GM12878 (cell line): ENCODE measurements at regions of chr14 and their contacts with region 1.

Region 1: DNA sequence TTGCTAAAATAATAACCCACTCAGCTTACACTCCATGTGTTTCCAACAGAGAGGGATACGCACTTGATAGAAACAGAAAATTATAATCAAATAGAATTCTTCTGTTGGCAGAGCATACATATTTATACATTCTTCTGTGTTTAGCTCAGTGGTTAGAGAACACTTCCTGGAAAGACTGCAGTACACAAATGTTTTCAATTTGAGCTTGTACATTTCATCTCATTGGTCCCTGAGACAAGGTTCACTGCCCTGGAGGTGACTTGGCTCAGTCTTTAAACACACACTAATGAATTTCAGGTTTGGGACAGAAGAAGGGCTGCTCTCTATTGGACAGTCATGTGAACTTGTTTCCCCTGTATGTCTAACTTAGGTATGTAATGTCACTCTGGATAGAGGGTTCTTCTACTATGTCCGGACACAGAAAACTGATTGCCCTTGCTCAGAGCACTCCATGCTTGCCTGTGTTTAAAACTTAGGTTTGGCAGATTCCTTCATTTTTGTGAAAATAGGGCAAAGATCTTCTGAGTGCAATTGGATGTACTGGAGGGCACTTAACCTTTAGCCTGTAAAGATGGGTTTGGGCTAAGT is 22.9 kb downstream of the PROX2 start:
- DNase-seq: no peak
- ATAC-seq: peak; percentile 32
- H3K4me3 ChIP-seq: no peak overlapping the region
- H3K27ac ChIP-seq: no peak overlapping the region
- H3K4me1 ChIP-seq: no peaks in the 10 kb centered on the region
- H3K27me3 ChIP-seq: no peaks in the 10 kb centered on the region
- CTCF ChIP-seq: no peak
- EP300 ChIP-seq: no peak
- POLR2A ChIP-seq: no peak
- RAD21 ChIP-seq: no peak

Region 2: DNA sequence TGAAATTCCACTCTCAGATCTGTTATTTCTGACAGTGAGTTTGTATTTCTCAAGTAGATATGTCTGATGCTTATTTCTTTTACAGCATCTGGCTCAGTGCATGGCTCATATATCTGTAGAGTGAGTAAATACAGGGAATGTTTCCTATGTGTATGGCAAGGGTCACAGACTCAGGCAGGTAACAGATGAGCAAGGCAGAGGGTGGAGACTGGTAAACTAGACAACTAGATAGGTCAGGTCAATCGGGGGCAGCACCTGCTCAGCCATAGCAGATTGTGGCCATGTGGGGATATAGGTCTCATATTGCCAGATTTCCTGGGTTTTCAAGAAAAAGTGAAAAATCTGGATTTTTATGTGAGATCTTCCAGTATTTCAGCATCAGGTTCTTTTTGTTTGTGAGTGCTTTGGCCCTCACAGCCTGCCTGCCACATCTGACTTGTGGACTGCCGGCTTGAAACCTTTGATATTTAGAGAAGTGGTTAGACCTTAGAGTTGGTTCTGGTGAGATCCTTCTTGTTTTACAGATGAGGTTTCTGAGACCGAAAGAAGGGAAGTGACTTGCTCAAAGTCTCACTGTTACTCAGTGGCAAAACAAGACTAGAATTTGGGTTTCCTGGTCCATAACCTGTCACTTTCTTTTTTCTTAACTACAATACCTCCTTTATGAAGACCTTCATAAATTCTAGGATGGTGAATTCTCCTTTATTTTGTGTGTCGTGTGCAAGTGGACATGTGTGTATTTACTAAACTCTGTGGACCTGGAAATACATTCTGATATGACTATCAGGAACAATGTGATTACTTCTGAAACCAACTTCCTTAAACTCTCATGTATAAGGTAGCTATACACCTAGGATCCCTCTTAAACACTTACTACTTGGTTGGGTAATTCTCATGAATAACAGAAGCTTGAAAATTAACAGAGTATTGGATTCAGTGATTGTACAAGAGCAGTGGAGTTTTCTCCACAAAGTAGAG is 11.5 kb before region 1 on chr14:
- CTCF ChIA-PET with region 1: interaction called, 106 read pairs
- POLR2A ChIA-PET with region 1: no interaction called
- RAD21 ChIA-PET with region 1: interaction called, 7 read pairs
- SMC1A ChIA-PET with region 1: interaction called, 16 read pairs
- in situ Hi-C with region 1: no loop called
- intact Hi-C with region 1: no loop called
- DNase-seq: peak; percentile 77
- ATAC-seq: peak; percentile 95
- H3K4me3 ChIP-seq: peak overlapping the region; percentile 25; the same call in 1 of the 2 replicates
- H3K27ac ChIP-seq: peak overlapping the region; percentile 86
- H3K4me1 ChIP-seq: peaks cover 44% of the 10 kb centered on the region
- H3K27me3 ChIP-seq: no peaks in the 10 kb centered on the region
- CTCF ChIP-seq: no peak
- EP300 ChIP-seq: peak; percentile 47 to 74; a peak in 3 of 4 replicates
- POLR2A ChIP-seq: no peak
- RAD21 ChIP-seq: no peak